ENCODE measurements at regions of chr5 and their contacts with region 1.

Region 1: DNA sequence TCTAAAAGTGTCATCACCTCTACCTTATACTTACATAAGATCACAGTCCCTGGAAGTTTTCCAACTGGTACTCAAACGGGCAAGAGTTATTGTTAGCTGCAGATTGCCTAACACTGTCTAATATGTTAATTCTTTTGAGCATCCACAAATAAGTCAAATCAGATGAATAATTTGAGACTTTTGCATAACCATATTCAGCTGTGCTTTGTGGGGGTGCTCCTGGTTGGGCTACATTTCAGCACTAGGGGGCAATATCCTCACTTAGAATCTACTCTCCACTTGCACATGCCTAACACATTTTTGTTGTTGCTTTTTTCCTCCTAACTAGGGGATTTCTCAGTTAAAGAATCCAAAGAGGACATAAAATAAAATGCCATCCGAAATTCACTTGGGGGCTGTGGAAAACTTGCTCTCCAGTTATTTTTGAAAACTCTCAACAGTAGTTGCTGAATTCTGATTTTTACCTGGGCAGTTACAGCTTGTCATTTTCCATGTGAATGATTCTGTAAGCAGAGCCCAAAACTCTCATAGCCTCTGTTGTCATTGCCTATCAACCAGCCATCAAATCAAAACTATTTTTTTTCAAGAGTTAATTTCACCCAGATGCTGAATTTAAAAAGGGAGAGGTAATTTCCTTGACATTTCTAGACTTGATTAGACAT is 71.5 kb downstream of the TRIM36 start:
- DNase-seq: peak; percentile 24 to 38
- H3K4me3 ChIP-seq: no peak overlapping the region
- H3K27ac ChIP-seq: no peak overlapping the region
- H3K4me1 ChIP-seq: no peaks in the 10 kb centered on the region
- H3K27me3 ChIP-seq: no peaks in the 10 kb centered on the region
- CTCF ChIP-seq: peak; percentile 82

Region 2: DNA sequence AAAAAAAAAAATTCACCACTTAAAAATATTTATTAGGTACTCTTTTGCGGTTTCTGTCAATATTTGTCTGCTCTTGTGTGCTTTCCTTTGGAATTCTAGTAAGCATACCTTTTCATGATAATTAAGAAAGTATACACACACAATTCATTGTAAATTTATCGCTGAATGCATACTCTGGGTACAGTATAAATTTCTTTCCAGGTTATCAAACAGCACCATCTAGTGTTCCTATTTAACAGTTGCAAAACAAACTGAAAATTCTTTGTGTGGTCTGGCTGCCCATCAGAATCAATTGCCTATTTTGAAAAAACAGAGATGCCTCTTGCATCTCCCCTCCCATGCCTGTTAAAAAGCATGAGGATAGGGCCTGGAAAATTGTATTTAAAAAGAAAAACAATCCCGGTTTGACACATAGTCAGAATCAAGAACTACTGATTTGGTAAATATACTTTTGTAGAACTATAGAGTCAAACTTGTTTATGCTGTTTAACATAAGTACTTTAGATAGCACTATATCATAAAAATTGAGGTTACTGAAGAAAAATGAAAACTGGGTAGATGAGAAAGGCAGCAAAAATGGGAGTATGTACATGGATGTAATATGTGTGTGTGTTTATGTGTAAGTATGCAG is 148.3 kb after region 1 on chr5:
- CTCF ChIA-PET with region 1: no interaction called
- POLR2A ChIA-PET with region 1: no interaction called
- intact Hi-C with region 1: loop called (anchors 1 kb)
- DNase-seq: no peak
- H3K4me3 ChIP-seq: no peak overlapping the region
- H3K27ac ChIP-seq: no peak overlapping the region
- H3K4me1 ChIP-seq: no peaks in the 10 kb centered on the region
- H3K27me3 ChIP-seq: no peaks in the 10 kb centered on the region
- CTCF ChIP-seq: peak; percentile 83

Region 3: DNA sequence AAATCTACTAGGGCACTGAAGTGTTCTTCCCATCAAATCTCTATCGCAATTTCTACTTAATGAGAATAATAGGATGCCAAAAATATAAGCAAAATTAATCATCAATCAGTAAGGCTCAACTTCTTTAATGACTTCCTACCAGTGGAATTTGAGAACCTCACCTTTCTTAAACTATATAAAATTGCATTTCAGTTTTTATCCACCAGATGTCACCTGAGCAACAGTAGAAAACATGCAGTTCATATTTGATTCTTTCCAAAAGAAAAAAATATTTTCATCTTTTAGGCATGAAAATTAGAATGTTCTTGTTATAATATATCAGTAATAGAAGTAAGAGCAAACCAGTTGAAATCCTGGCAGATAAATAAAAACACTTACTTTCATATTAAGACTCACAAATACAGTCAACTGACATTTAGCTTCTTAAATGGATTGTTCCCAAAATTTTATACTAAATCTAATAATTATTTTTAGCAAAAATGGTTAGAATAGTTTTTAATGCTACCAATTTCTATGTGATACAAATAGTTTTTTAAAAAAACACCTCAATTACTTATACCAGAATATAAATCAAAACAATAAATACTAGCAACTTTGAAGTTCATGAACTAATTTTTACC is 211.7 kb after region 1 on chr5:
- CTCF ChIA-PET with region 1: no interaction called
- POLR2A ChIA-PET with region 1: no interaction called
- intact Hi-C with region 1: loop called (anchors 2 kb)
- DNase-seq: peak in 1 of 2 experiments; percentile 68
- H3K4me3 ChIP-seq: no peak overlapping the region
- H3K27ac ChIP-seq: no peak overlapping the region
- H3K4me1 ChIP-seq: peaks cover 21% of the 10 kb centered on the region
- H3K27me3 ChIP-seq: no peaks in the 10 kb centered on the region
- CTCF ChIP-seq: peak; percentile 85

Region 4: GRCh38 chr5:115586601-115587048 is 488.5 kb after region 1 on chr5:
- CTCF ChIA-PET with region 1: no interaction called
- POLR2A ChIA-PET with region 1: no interaction called
- intact Hi-C with region 1: loop called (anchors 1 kb)
- DNase-seq: no peak
- H3K4me3 ChIP-seq: no peak overlapping the region
- H3K27ac ChIP-seq: no peak overlapping the region
- H3K4me1 ChIP-seq: peaks cover 10% of the 10 kb centered on the region; the same call in 1 of the 2 replicates
- H3K27me3 ChIP-seq: no peaks in the 10 kb centered on the region
- CTCF ChIP-seq: peak; percentile 82